ENCODE measurements at regions of chr3 and their contacts with region 1.

Region 1: DNA sequence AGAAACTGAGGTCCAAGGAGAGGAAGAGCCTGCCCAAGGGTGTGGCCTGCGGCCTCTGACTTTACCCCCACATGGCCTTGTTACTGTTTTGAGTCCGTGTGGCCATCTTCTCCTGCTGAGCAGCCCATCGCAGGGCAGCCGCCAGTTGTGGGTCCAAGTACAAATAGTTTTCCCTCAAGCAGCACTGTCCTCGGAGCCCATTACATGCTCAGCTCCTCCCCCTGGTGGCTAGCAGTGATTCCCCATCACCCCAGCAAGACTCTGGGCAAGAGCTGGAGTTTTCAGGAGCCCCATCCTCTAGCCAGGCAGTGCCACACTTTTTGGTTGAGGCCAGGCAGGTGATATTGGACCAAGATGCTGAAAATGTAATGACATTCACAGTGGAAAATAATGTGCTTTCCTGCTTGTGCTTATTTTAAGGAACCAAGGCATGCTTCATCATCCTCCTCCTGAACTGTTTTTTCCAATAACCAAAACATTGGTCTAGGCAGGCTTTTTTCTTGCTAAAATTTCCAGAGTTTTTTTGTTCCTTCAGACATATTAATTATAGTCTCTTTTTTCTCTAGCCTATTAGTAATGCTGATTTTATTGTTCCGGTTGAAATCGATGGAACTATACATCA is 23.2 kb upstream of the VILL start:
- DNase-seq: peak; percentile 81 to 85
- ATAC-seq: peak; percentile 77
- H3K4me3 ChIP-seq: no peak overlapping the region
- H3K27ac ChIP-seq: no peak overlapping the region
- H3K4me1 ChIP-seq: no peaks in the 10 kb centered on the region
- H3K27me3 ChIP-seq: no peaks in the 10 kb centered on the region

Region 2: GRCh38 chr3:37729119-37729518 is 238.3 kb before region 1 on chr3:
- intact Hi-C with region 1: no loop called
- DNase-seq: no peak
- ATAC-seq: no peak
- H3K4me3 ChIP-seq: no peak overlapping the region
- H3K27ac ChIP-seq: no peak overlapping the region
- H3K4me1 ChIP-seq: peaks cover 4 to 11% of the 10 kb centered on the region in 2 donors
- H3K27me3 ChIP-seq: no peaks in the 10 kb centered on the region

Region 3: GRCh38 chr3:37856381-37856780 is 111.0 kb before region 1 on chr3:
- intact Hi-C with region 1: loop called (anchors 1 kb)
- DNase-seq: peak in 1 of 2 donors; percentile 58
- ATAC-seq: no peak
- H3K4me3 ChIP-seq: no peak overlapping the region
- H3K27ac ChIP-seq: peak overlapping the region in 1 of 2 donors; percentile 7
- H3K4me1 ChIP-seq: peaks cover 4% of the 10 kb centered on the region in 2 donors
- H3K27me3 ChIP-seq: no peaks in the 10 kb centered on the region

Region 4: GRCh38 chr3:38059148-38059547 is 91.8 kb after region 1 on chr3:
- intact Hi-C with region 1: no loop called
- DNase-seq: no peak
- ATAC-seq: no peak
- H3K4me3 ChIP-seq: no peak overlapping the region
- H3K27ac ChIP-seq: no peak overlapping the region
- H3K4me1 ChIP-seq: no peaks in the 10 kb centered on the region
- H3K27me3 ChIP-seq: no peaks in the 10 kb centered on the region